Posterior vena cava (tissue), 2 donors: ENCODE measurements at regions of chrX and their contacts with region 1.

Region 1: GRCh38 chrX:19410259-19410658 is 66.5 kb downstream of the PDHA1 start:
- DNase-seq: no peak

Region 2: GRCh38 chrX:17860811-17861488 is 1549.3 kb before region 1 on chrX and contains the start of gene RAI2:
- intact Hi-C with region 1: loop called in 1 of 2 experiments (anchors 10 kb)
- DNase-seq: no peak
- total RNA-seq, gene RAI2: 32.5 to 33.8 TPM

Region 3: DNA sequence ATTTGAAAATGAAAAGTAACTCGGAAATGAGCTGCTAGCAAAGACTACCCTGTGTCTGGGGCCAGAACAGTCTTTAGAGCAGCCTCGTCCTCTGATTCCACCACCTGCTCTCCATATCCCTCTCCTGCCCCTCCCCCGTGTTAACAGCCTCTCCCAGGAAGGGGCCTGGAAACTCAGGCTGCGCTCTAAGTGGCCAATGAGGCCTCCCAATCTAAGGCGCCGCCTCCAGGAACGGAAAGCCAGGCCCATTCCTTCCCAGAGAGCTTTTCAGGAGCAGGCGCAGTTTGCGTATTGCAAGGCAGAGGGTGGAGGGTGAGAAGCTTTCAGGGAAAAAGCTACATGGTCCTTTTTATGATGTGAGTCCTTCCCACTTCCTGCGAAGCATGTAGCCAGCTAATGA is 769.6 kb before region 1 on chrX:
- intact Hi-C with region 1: no loop called
- DNase-seq: no peak

Region 4: GRCh38 chrX:19479458-19479857 is 69.2 kb after region 1 on chrX:
- intact Hi-C with region 1: no loop called
- DNase-seq: no peak

Region 5: DNA sequence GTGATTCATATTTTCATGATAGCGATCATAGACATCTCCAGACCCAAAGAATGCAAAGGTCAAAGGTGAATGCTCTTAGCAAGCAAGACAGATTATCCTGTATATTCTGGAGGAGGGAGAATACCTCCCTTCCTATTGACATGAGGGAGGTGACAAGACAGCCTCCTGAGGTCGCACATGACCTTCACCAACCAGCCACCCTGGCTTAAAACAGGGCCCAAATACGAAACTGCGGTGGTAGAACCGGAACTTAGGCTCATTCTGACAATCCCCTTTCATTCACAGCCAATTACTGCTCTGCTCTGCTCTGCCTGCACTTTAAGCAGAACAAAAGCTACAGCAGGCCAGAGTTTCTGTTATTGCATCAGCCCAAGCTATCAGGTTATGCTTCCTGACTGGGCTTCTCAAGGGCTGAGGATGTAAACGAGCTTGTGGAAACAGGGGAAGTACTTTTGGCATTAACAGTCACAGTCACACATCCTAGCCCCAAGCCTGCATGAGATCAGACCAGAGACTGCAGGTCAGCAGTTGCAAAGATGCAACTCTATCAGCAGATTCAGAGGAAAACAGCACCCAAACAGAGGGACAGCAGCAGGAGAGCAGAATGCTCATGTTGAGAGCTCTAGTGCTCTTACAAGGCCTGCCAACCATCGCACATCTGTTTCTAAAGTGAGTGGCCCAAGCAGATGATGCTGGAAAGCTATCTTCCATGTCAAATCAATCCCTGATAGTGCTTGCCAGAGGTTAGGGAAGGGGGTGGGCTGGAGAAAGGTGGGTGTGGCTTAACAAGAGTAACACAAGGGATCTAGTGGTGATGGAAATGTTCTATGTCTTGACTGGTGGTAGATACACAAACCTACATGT is 156.3 kb after region 1 on chrX:
- intact Hi-C with region 1: no loop called
- DNase-seq: no peak

Region 6: GRCh38 chrX:20011608-20012007 is 601.3 kb after region 1 on chrX:
- intact Hi-C with region 1: no loop called
- DNase-seq: no peak